Activated B cell treated with CpG ODN at 0.5 μM for 24 hours (primary cell): ENCODE measurements at regions of chr16 and their contacts with region 1.

Region 1: DNA sequence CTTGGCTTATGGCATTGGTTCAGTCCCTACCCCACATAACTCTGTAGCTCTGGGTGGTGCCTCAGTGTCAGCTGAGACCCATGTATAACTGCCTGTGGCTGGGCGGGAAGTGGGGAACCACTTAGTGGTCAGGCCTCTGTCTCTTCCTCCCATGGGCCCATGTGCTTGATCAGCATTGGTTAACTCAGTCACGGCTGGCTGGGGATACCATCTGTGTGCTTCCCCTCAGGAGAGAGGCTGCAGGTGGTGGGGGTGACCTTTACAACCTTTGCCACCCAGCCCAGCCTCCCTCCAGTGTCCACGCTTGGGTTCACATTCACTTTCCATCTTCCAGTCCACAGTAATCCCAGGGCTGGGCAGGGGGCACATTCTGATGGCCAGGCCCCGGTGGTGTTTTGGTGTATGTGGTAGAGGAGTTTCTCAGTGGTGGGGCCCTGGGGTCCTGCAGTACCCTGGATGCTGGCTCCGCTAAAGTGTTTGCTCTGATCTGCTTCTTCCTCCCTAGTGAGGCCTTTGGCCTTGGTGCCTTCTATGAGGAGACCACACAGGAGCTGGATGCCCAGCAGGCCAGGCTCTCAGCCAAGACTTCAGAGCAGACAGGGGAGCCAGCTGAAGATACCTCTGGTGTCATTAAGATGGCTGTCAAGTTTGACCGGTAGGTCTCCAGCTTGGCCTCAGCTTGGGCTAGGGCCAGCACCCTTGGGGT is 10.2 kb upstream of the NFATC3 start:
- DNase-seq: peak; percentile 76
- ATAC-seq: peak; percentile 90
- H3K4me3 Mint-ChIP-seq: peak overlapping the region; percentile 81
- H3K27ac Mint-ChIP-seq: peak overlapping the region; percentile 96
- H3K4me1 Mint-ChIP-seq: peaks cover 88% of the 10 kb centered on the region
- H3K27me3 Mint-ChIP-seq: no peaks in the 10 kb centered on the region
- CTCF ChIP-seq: no peak

Region 2: GRCh38 chr16:67917852-67918236 is 157.2 kb before region 1 on chr16:
- CTCF ChIA-PET with region 1: no interaction called
- POLR2A ChIA-PET with region 1: no interaction called
- intact Hi-C with region 1: no loop called
- DNase-seq: no peak
- ATAC-seq: peak; percentile 50
- H3K4me3 Mint-ChIP-seq: no peak overlapping the region
- H3K27ac Mint-ChIP-seq: no peak overlapping the region
- H3K4me1 Mint-ChIP-seq: peaks cover 4% of the 10 kb centered on the region
- H3K27me3 Mint-ChIP-seq: no peaks in the 10 kb centered on the region
- CTCF ChIP-seq: no peak

Region 3: GRCh38 chr16:67979955-67980678 is 94.9 kb before region 1 on chr16 and contains the start of gene DPEP3:
- CTCF ChIA-PET with region 1: no interaction called
- POLR2A ChIA-PET with region 1: interaction called, 19 read pairs
- intact Hi-C with region 1: no loop called
- DNase-seq: no peak
- ATAC-seq: no peak
- H3K4me3 Mint-ChIP-seq: no peak within 1 kb of the TSS
- H3K27ac Mint-ChIP-seq: no peak within 1 kb of the TSS
- H3K4me1 Mint-ChIP-seq: peaks cover 33% of the 10 kb centered on the region
- H3K27me3 Mint-ChIP-seq: no peaks in the 10 kb centered on the region
- CTCF ChIP-seq: no peak
- total RNA-seq, gene DPEP3: 0.29 and 0.38 TPM in 2 replicates

Region 4: GRCh38 chr16:68064791-68065365 is 10.1 kb before region 1 on chr16:
- CTCF ChIA-PET with region 1: interaction called, 16 read pairs
- POLR2A ChIA-PET with region 1: interaction called, 16 read pairs
- intact Hi-C with region 1: loop called (anchors 1 kb)
- DNase-seq: peak; percentile 52
- ATAC-seq: peak; percentile 93
- H3K4me3 Mint-ChIP-seq: no peak overlapping the region
- H3K27ac Mint-ChIP-seq: no peak overlapping the region
- H3K4me1 Mint-ChIP-seq: peaks cover 27% of the 10 kb centered on the region
- H3K27me3 Mint-ChIP-seq: no peaks in the 10 kb centered on the region
- CTCF ChIP-seq: no peak

Region 5: GRCh38 chr16:68093816-68094613 is 19.0 kb after region 1 on chr16:
- CTCF ChIA-PET with region 1: interaction called, 15 read pairs
- POLR2A ChIA-PET with region 1: interaction called, 3 read pairs
- intact Hi-C with region 1: loop called (anchors 2 kb)
- DNase-seq: no peak
- ATAC-seq: peak; percentile 67
- H3K4me3 Mint-ChIP-seq: peak overlapping the region; percentile 6
- H3K27ac Mint-ChIP-seq: peak overlapping the region; percentile 65
- H3K4me1 Mint-ChIP-seq: peaks cover 87% of the 10 kb centered on the region
- H3K27me3 Mint-ChIP-seq: no peaks in the 10 kb centered on the region
- CTCF ChIP-seq: no peak